ENCODE measurements at regions of chr15 and their contacts with region 1.

Region 1: GRCh38 chr15:31326156-31326732 is 391 bp upstream of the KLF13 start:
- DNase-seq: peak; percentile 99
- H3K4me3 Mint-ChIP-seq: peak overlapping the region; percentile 87
- H3K27ac Mint-ChIP-seq: peak overlapping the region; percentile 78
- H3K4me1 Mint-ChIP-seq: peaks cover 33% of the 10 kb centered on the region
- H3K27me3 Mint-ChIP-seq: no peaks in the 10 kb centered on the region

Region 2: GRCh38 chr15:30991255-30992072 is 334.8 kb before region 1 on chr15 and contains the start of gene MTMR10:
- CTCF ChIA-PET with region 1: no interaction called
- intact Hi-C with region 1: loop called (anchors 5 kb)
- DNase-seq: peak; percentile 65
- H3K4me3 Mint-ChIP-seq: peak within 1 kb of the TSS; percentile 92
- H3K27ac Mint-ChIP-seq: peak within 1 kb of the TSS; percentile 77
- H3K4me1 Mint-ChIP-seq: peaks cover 30% of the 10 kb centered on the region
- H3K27me3 Mint-ChIP-seq: no peaks in the 10 kb centered on the region
- total RNA-seq, gene MTMR10: 9.7 to 10.5 TPM

Region 3: GRCh38 chr15:31338879-31339557 is 12.8 kb after region 1 on chr15:
- CTCF ChIA-PET with region 1: interaction called, 4 read pairs
- intact Hi-C with region 1: loop called (anchors 1 kb)
- DNase-seq: peak; percentile 78
- H3K4me3 Mint-ChIP-seq: no peak overlapping the region
- H3K27ac Mint-ChIP-seq: peak overlapping the region; percentile 85
- H3K4me1 Mint-ChIP-seq: peaks cover 99% of the 10 kb centered on the region
- H3K27me3 Mint-ChIP-seq: no peaks in the 10 kb centered on the region

Region 4: DNA sequence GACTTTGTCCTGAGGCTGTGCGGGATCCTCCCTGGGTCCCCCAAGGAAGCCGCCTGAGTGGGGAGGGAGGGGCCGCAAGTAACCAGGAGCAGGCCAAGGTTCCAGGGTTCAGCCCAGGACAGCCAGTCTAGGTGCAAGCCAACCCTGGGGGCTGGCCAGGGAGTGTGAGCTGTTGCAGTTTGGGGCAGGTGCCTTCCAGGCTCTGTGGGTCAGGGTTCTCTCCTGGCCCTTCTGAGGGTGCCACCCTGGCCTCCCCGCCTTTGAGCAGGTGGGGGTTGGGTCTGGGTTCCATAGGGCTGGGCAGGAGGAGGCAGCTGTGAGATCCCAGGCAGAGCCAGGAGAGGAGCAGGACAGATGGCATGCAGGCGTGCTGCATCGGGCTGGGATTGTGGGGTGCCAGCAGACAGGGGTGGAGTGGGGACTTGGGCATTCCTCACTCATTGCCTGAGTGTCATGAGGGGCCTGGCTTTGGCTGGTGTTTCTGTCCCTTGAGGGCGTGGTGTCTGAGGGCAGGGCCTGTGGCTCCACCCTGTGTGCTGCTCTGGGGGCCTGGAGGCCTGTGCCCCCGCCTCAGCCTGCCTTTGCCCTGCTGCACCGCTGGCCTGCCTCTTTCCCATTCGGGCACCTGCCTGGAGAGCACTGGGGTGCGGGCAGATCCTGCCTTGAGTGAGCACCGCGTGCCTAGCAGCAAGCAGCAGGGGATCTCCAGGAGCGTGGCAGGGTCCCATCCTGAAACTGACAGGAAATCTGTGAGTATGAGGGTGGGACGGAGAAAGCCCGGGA is 18.8 kb after region 1 on chr15:
- CTCF ChIA-PET with region 1: interaction called, 7 read pairs
- intact Hi-C with region 1: loop called (anchors 1 kb)
- DNase-seq: peak; percentile 66
- H3K4me3 Mint-ChIP-seq: peak overlapping the region; percentile 92
- H3K27ac Mint-ChIP-seq: peak overlapping the region; percentile 99
- H3K4me1 Mint-ChIP-seq: peaks cover 98% of the 10 kb centered on the region
- H3K27me3 Mint-ChIP-seq: no peaks in the 10 kb centered on the region

Region 5: DNA sequence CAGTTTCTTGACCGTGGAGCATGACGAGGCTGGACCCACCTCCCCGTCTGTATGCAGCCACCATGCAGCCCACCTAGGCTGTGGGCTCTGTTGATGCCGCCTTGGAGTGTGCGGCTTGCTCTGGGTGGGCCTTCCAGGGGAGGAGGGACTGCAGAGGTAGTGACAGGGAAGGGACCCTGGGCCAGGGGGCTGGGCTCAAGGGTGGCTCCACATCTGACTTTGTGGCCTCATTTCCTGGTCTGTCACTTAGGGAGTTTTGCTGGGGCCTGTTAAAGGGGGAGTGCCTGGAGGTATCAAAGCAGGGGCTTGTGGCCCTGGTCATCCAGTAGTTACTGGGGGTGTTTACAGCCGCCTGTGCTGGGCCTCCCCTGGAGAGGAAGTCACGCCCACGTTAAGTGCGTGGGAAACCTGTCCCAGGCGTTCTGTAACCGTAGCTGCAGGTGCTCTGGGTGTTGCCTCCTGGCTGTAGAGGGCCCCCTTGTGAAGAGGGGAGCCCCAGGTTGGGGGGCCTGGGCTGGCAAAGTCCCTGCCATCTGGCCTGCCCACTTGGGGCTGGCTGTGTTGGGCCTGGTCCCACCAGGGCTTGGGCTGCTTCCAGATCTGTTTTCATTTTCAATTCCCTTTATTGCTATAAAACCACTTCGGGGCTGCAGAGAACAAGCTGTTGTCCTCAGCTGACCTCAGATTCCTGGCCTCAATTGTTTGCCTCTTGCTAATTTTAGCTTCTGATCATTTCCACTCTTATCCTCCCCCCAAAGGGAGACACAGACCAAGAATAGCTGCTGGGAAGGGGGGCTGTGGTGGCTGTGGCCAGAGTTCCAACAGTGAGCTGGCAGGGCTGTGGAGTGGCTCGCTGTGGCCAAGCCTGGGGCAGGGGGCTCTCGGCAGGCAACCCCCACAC is 26.9 kb after region 1 on chr15:
- CTCF ChIA-PET with region 1: interaction called, 3 read pairs
- intact Hi-C with region 1: loop called (anchors 1 kb)
- DNase-seq: peak; percentile 78
- H3K4me3 Mint-ChIP-seq: peak overlapping the region; percentile 57
- H3K27ac Mint-ChIP-seq: peak overlapping the region; percentile 95
- H3K4me1 Mint-ChIP-seq: peaks cover 98% of the 10 kb centered on the region
- H3K27me3 Mint-ChIP-seq: no peaks in the 10 kb centered on the region

Region 6: GRCh38 chr15:31452595-31453185 is 126.4 kb after region 1 on chr15:
- CTCF ChIA-PET with region 1: no interaction called
- intact Hi-C with region 1: no loop called
- DNase-seq: no peak
- H3K4me3 Mint-ChIP-seq: no peak overlapping the region
- H3K27ac Mint-ChIP-seq: no peak overlapping the region
- H3K4me1 Mint-ChIP-seq: peaks cover 16% of the 10 kb centered on the region
- H3K27me3 Mint-ChIP-seq: no peaks in the 10 kb centered on the region

Region 7: GRCh38 chr15:31792611-31793385 is 466.6 kb after region 1 on chr15:
- CTCF ChIA-PET with region 1: no interaction called
- intact Hi-C with region 1: no loop called
- DNase-seq: no peak
- H3K4me3 Mint-ChIP-seq: no peak overlapping the region
- H3K27ac Mint-ChIP-seq: no peak overlapping the region
- H3K4me1 Mint-ChIP-seq: no peaks in the 10 kb centered on the region
- H3K27me3 Mint-ChIP-seq: peaks cover 4% of the 10 kb centered on the region